CD14-positive monocyte (primary cell): ENCODE measurements at regions of chr22 and their contacts with region 1.

Region 1: GRCh38 chr22:31080848-31081649 is at the start of gene SMTN:
- DNase-seq: peak; percentile 76 to 86 (median 80)
- H3K4me3 ChIP-seq: peak within 1 kb of the TSS; percentile 56 to 85 (median 75)
- H3K4me3 Mint-ChIP-seq: peak within 1 kb of the TSS; percentile 83 to 94
- H3K27ac ChIP-seq: peak within 1 kb of the TSS in 1 of 2 donors; percentile 64
- H3K27ac Mint-ChIP-seq: peak within 1 kb of the TSS in 6 of 7 donors; percentile 40 to 87 (median 74)
- H3K4me1 ChIP-seq: peaks cover 40 to 53% of the 10 kb centered on the region in 2 donors
- H3K4me1 Mint-ChIP-seq: peaks cover 45% of the 10 kb centered on the region
- H3K27me3 ChIP-seq: no peaks in the 10 kb centered on the region
- H3K27me3 Mint-ChIP-seq: peaks cover 3 to 6% (median 4%) of the 10 kb centered on the region in 3 donors
- CTCF ChIP-seq: no peak
- polyA plus RNA-seq, gene SMTN: 0.87 to 13.3 (median 0.88) TPM

Region 2: DNA sequence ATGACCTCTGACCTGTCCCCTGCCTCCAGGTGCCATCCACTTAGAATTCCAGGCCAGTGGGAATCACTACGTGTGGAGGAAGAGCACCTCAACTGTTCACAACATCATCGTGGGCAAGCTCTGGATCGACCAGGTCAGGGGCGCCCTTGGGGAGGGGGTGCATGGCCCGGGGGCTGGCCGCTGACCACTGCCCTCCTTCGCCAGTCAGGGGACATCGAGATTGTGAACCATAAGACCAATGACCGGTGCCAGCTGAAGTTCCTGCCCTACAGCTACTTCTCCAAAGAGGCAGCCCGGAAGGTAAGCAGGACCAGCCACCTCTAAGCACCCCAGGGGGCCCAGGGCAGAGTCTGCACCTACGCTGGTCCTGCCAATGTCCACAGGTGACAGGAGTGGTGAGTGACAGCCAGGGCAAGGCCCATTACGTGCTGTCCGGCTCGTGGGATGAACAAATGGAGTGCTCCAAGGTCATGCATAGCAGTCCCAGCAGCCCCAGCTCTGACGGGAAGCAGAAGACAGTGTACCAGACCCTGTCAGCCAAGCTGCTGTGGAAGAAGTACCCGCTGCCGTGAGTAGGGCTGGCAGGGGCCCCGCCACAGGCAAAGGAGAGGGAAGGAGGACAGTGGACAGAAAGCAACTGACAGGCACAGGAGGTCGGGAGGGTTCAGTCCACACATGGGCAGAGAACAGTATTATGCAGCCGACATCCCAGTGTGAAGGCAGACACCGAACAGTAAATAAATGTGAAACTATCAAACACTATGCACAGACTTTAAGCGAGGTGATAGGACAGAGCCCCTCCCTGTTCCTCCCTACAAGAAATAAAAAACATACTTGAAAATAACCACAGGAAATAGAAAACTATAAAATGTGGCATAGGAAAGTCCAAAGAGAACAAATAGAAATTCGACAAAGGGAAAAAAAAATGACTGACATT is 187.3 kb before region 1 on chr22:
- intact Hi-C with region 1: no loop called
- DNase-seq: no peak
- H3K4me3 ChIP-seq: no peak overlapping the region
- H3K4me3 Mint-ChIP-seq: no peak overlapping the region
- H3K27ac ChIP-seq: no peak overlapping the region
- H3K27ac Mint-ChIP-seq: peak overlapping the region in 1 of 7 donors; percentile 35
- H3K4me1 ChIP-seq: no peaks in the 10 kb centered on the region
- H3K4me1 Mint-ChIP-seq: no peaks in the 10 kb centered on the region
- H3K27me3 ChIP-seq: no peaks in the 10 kb centered on the region
- H3K27me3 Mint-ChIP-seq: peaks cover 1 to 5% (median 2%) of the 10 kb centered on the region in 3 donors
- CTCF ChIP-seq: no peak

Region 3: GRCh38 chr22:30947816-30948454 is 133.1 kb before region 1 on chr22:
- intact Hi-C with region 1: loop called (anchors 5 kb)
- DNase-seq: peak; percentile 15 to 36 (median 21)
- H3K4me3 ChIP-seq: no peak overlapping the region
- H3K4me3 Mint-ChIP-seq: no peak overlapping the region
- H3K27ac ChIP-seq: peak overlapping the region in 1 of 2 donors; percentile 17
- H3K27ac Mint-ChIP-seq: no peak overlapping the region
- H3K4me1 ChIP-seq: no peaks in the 10 kb centered on the region
- H3K4me1 Mint-ChIP-seq: peaks cover 2% of the 10 kb centered on the region
- H3K27me3 ChIP-seq: no peaks in the 10 kb centered on the region
- H3K27me3 Mint-ChIP-seq: peaks cover 0 to 2% (median 0%) of the 10 kb centered on the region in 3 donors
- CTCF ChIP-seq: peak; percentile 52

Region 4: DNA sequence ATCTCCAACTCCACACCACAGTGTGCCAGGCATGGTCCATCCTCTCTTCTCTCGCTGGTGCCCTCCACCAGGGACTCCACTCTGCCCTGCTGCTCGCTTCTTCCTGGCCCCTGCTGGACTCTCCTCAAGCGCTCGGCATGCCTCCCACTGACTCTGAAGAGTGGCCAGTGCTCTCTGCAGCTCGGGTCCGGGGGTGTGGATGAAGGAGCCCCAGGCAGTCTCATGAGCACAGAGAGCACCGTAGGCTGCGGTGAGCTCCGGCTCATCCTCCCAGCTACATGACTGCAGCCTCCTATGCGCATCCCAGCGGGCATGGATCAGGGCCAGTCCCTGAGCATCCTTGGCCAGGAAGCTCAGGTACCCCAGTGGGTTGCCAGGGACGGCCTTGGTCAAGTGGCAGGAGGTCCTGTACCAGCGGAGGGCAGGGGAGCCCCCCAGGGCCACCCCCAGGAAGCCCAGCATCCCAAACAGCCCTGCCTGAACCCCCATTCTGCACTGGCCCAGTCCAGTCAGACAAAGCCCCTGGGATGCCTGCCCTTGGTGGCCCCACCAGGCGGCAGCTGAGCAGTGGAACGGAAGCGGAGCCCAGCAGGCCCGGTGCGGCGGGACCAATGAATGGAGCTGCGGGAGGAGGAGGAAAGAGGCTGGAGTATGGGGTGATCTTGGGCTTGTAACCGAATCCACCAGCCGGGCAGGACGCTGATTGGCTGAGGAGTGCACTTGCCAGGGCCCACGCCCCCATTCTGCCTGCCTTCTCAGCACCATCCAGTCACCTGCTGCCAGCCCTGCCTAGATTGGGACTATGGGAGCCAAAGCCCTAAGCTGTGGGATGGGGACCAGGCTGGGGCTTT is 59.0 kb after region 1 on chr22 and contains the start of gene PLA2G3:
- intact Hi-C with region 1: no loop called
- DNase-seq: no peak
- H3K4me3 ChIP-seq: no peak within 1 kb of the TSS
- H3K4me3 Mint-ChIP-seq: no peak within 1 kb of the TSS
- H3K27ac ChIP-seq: no peak within 1 kb of the TSS
- H3K27ac Mint-ChIP-seq: no peak within 1 kb of the TSS
- H3K4me1 ChIP-seq: no peaks in the 10 kb centered on the region
- H3K4me1 Mint-ChIP-seq: peaks cover 1% of the 10 kb centered on the region
- H3K27me3 ChIP-seq: peaks cover 0 to 2% of the 10 kb centered on the region in 2 donors
- H3K27me3 Mint-ChIP-seq: peaks cover 4 to 14% (median 13%) of the 10 kb centered on the region in 3 donors
- CTCF ChIP-seq: no peak
- polyA plus RNA-seq, gene PLA2G3: not detected

Region 5: GRCh38 chr22:31211862-31212730 is 131.0 kb after region 1 on chr22 and contains the start of gene LIMK2:
- intact Hi-C with region 1: no loop called
- DNase-seq: peak; percentile 80 to 89 (median 88)
- H3K4me3 ChIP-seq: peak within 1 kb of the TSS; percentile 71 to 97 (median 94)
- H3K4me3 Mint-ChIP-seq: peak within 1 kb of the TSS; percentile 91 to 93
- H3K27ac ChIP-seq: peak within 1 kb of the TSS; percentile 76 to 92
- H3K27ac Mint-ChIP-seq: peak within 1 kb of the TSS; percentile 86 to 97 (median 93)
- H3K4me1 ChIP-seq: peaks cover 61 to 69% of the 10 kb centered on the region in 2 donors
- H3K4me1 Mint-ChIP-seq: peaks cover 62% of the 10 kb centered on the region
- H3K27me3 ChIP-seq: no peaks in the 10 kb centered on the region
- H3K27me3 Mint-ChIP-seq: peaks cover 0 to 6% (median 0%) of the 10 kb centered on the region in 3 donors
- CTCF ChIP-seq: peak; percentile 84
- polyA plus RNA-seq, gene LIMK2: 5.5 to 14.2 (median 10.1) TPM